ENCODE measurements at regions of chr1 and their contacts with region 1.

Region 1: DNA sequence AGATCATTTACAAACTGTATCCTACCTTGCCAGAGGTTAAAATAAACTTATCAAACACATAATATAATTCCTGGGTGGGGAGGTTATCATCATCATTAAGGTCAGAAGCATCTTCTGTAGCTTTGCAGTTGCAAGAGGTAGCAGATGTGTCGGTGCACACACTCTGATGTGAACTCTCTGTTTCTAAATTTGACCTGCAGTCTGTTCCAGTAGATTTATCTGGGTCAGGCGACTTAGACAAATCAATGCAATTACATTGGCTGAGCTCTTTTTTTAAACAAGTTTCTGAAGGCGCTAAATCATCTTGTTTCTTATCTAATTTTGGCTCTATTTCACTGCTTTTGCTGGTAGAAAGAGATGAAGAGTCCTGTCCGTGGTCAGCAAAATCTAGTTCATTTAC is 70.4 kb downstream of the PRPF38A start:
- DNase-seq: no peak
- ATAC-seq: no peak
- H3K4me3 ChIP-seq: no peak overlapping the region
- H3K4me3 Mint-ChIP-seq: no peak overlapping the region
- H3K27ac ChIP-seq: no peak overlapping the region
- H3K27ac Mint-ChIP-seq: no peak overlapping the region
- H3K4me1 ChIP-seq: no peaks in the 10 kb centered on the region
- H3K4me1 Mint-ChIP-seq: peaks cover 0 to 21% (median 8%) of the 10 kb centered on the region in 7 donors
- H3K27me3 ChIP-seq: no peaks in the 10 kb centered on the region
- H3K27me3 Mint-ChIP-seq: no peaks in the 10 kb centered on the region

Region 2: DNA sequence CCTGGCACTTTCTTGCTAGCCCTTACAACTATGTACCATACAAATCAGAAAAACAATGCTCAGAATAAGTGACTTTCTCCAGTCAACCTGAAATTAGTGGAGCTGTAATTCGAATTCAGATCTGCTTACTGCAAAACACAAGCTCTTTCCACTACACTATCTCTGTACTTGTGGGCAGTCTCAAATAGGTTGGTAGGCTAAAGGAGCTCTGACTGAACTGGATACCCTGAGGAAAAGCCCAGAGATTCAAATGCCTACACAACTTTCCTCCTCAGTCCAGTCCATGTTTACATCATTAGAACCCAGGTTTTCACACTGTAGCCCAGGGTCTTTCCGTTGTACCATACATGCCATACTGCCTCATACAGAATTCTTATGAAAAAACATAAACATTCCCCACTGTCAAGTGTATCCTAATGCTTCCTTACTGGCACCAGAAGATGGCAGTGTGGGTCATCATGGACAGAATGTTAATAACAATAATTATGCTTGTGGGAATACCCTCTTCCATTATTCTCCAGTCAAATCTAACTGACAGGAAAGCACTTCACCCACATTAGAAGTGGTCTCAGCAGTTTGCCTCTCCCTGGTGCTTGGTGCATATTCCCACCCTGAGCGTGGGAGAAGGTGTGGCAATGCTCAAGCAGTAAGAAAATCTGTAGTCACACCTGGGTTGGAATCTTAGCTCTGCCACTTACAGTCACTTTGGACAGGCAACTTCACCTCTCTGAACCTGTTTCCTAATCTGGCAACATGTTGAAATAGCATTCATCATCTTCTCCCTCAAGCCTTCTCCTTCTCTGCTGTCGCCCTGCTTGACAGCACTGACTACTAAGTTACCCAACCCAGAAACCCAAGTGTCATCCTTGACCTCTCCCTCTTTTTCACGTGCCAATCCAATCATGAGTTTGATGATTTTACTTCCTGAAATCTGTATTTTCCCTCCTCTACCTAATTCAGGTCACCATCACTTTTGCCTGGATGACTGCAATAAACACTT is 347.3 kb before region 1 on chr1:
- CTCF ChIA-PET with region 1: no interaction called
- POLR2A ChIA-PET with region 1: no interaction called
- intact Hi-C with region 1: no loop called
- DNase-seq: peak in 3 of 9 donors; percentile 14 to 27 (median 25)
- ATAC-seq: peak; percentile 64
- H3K4me3 ChIP-seq: no peak overlapping the region
- H3K4me3 Mint-ChIP-seq: no peak overlapping the region
- H3K27ac ChIP-seq: no peak overlapping the region
- H3K27ac Mint-ChIP-seq: no peak overlapping the region
- H3K4me1 ChIP-seq: no peaks in the 10 kb centered on the region
- H3K4me1 Mint-ChIP-seq: peaks cover 0 to 4% (median 0%) of the 10 kb centered on the region in 7 donors
- H3K27me3 ChIP-seq: no peaks in the 10 kb centered on the region
- H3K27me3 Mint-ChIP-seq: peaks cover 0 to 47% (median 9%) of the 10 kb centered on the region in 5 donors

Region 3: DNA sequence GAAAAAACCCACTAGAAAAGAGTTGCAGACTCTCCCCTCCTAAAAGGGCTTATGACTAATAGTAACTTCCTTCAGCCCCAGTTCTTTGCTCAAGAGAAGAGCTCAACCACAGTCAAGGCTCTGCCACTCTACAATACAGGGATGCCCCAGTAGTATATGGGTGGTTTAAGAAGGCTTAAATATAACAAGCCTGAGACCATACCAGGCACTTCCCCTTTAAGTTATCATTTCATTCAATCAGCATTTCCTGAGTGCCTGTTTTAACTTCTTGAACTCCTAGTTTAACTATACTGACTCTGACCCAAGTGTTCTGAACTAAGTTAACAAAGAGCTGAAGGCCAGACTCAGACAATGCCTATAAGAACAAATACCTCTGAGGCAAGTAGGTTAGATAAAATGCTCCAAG is 50.6 kb before region 1 on chr1:
- CTCF ChIA-PET with region 1: no interaction called
- POLR2A ChIA-PET with region 1: interaction called, 3 read pairs
- intact Hi-C with region 1: loop called in 1 of 2 experiments (anchors 5 kb)
- DNase-seq: peak in 7 of 9 donors; percentile 38 to 71 (median 57)
- ATAC-seq: peak; percentile 93
- H3K4me3 ChIP-seq: peak overlapping the region; percentile 14
- H3K4me3 Mint-ChIP-seq: peak overlapping the region; percentile 49 to 81 (median 74)
- H3K27ac ChIP-seq: peak overlapping the region; percentile 63
- H3K27ac Mint-ChIP-seq: peak overlapping the region; percentile 85 to 96 (median 91)
- H3K4me1 ChIP-seq: peaks cover 35 to 45% of the 10 kb centered on the region in 2 donors
- H3K4me1 Mint-ChIP-seq: peaks cover 33 to 72% (median 51%) of the 10 kb centered on the region in 7 donors
- H3K27me3 ChIP-seq: no peaks in the 10 kb centered on the region
- H3K27me3 Mint-ChIP-seq: no peaks in the 10 kb centered on the region

Region 4: DNA sequence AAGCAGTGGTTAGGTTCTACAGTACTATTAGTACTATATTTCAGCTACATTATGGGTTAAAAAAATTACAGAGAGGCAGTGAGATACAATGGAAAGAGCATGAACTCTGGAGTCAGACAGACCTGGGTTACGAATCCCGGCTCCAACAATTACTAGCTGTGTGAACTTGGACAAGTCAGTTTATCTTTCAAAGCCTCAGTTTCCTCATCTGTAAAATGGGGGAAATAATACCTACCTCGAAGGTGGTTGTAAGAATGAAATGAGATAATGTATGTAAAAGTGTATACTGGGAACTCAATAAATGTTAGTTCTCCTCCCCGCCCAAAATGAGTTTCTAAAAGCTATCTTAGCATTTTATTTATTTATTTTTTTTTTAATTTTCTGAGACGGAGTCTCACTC is 10.9 kb before region 1 on chr1:
- CTCF ChIA-PET with region 1: interaction called, 12 read pairs
- POLR2A ChIA-PET with region 1: interaction called, 5 read pairs
- intact Hi-C with region 1: no loop called
- DNase-seq: no peak
- ATAC-seq: no peak
- H3K4me3 ChIP-seq: no peak overlapping the region
- H3K4me3 Mint-ChIP-seq: no peak overlapping the region
- H3K27ac ChIP-seq: no peak overlapping the region
- H3K27ac Mint-ChIP-seq: peak overlapping the region in 1 of 9 donors; percentile 41
- H3K4me1 ChIP-seq: no peaks in the 10 kb centered on the region
- H3K4me1 Mint-ChIP-seq: peaks cover 0 to 11% (median 4%) of the 10 kb centered on the region in 7 donors
- H3K27me3 ChIP-seq: no peaks in the 10 kb centered on the region
- H3K27me3 Mint-ChIP-seq: no peaks in the 10 kb centered on the region

Region 5: DNA sequence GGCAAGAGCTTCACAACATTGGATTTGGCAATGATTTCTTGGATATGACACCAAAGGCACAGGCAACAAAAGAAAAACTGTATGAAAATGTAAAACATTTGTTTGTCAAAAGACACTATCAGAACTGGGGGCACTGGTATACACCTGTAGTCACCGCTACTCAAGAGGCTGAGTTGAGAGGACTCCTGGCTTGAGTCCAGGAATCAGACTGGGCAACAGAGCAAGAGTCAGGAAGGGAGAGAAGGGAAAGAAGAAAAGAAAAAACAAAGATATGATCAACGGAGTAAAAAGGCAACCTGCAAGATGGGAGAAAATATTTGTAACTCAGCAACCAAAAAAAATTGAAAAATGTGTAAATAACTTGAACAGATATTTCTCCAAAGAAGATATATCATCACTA is 84.1 kb after region 1 on chr1:
- CTCF ChIA-PET with region 1: no interaction called
- POLR2A ChIA-PET with region 1: no interaction called
- intact Hi-C with region 1: no loop called
- DNase-seq: no peak
- ATAC-seq: no peak
- H3K4me3 ChIP-seq: no peak overlapping the region
- H3K4me3 Mint-ChIP-seq: no peak overlapping the region
- H3K27ac ChIP-seq: no peak overlapping the region
- H3K27ac Mint-ChIP-seq: no peak overlapping the region
- H3K4me1 ChIP-seq: peaks cover 0 to 11% of the 10 kb centered on the region in 2 donors
- H3K4me1 Mint-ChIP-seq: peaks cover 0 to 22% (median 15%) of the 10 kb centered on the region in 7 donors
- H3K27me3 ChIP-seq: no peaks in the 10 kb centered on the region
- H3K27me3 Mint-ChIP-seq: peaks cover 0 to 18% (median 0%) of the 10 kb centered on the region in 5 donors

Measured in naive thymus-derived CD4-positive, alpha-beta T cell (primary cell).